ENCODE measurements at regions of chr7 and their contacts with region 1.

Region 1: GRCh38 chr7:158976849-158977593 is 120.7 kb downstream of the DYNC2I1 start:
- DNase-seq: peak; percentile 84
- H3K4me3 ChIP-seq: peak overlapping the region; percentile 39
- H3K27ac ChIP-seq: no peak overlapping the region
- H3K4me1 ChIP-seq: peaks cover 7% of the 10 kb centered on the region
- H3K27me3 ChIP-seq: no peaks in the 10 kb centered on the region
- CTCF ChIP-seq: peak; percentile 95

Region 2: DNA sequence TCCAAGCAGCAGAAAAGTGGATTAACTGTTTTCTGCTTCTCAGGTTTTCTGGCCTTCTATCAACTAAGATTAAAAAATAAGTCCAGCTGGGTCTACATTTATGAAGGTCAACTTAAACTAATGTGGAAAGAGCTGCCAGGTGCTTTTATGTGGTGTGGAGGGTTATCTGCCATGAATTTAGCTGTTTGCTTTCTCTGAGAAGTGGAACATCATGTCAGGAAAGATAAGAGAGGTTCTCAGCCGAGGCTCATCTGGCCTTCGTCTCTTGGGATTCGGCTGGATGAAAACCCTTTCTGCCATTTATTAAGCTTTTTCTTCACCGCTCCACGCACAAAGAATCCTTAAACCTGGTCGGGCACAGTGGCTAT is 394.9 kb before region 1 on chr7:
- CTCF ChIA-PET with region 1: interaction called, 13 read pairs
- POLR2A ChIA-PET with region 1: no interaction called
- intact Hi-C with region 1: no loop called
- DNase-seq: no peak
- H3K4me3 ChIP-seq: no peak overlapping the region
- H3K27ac ChIP-seq: no peak overlapping the region
- H3K4me1 ChIP-seq: no peaks in the 10 kb centered on the region
- H3K27me3 ChIP-seq: peaks cover 44% of the 10 kb centered on the region
- CTCF ChIP-seq: no peak

Region 3: GRCh38 chr7:158695726-158696452 is 281.1 kb before region 1 on chr7:
- CTCF ChIA-PET with region 1: interaction called, 8 read pairs
- POLR2A ChIA-PET with region 1: interaction called, 3 read pairs
- intact Hi-C with region 1: loop called (anchors 5 kb)
- DNase-seq: peak; percentile 73
- H3K4me3 ChIP-seq: no peak overlapping the region
- H3K27ac ChIP-seq: no peak overlapping the region
- H3K4me1 ChIP-seq: no peaks in the 10 kb centered on the region
- H3K27me3 ChIP-seq: no peaks in the 10 kb centered on the region
- CTCF ChIP-seq: peak; percentile 61

Region 4: GRCh38 chr7:158779061-158780000 is 197.7 kb before region 1 on chr7:
- CTCF ChIA-PET with region 1: no interaction called
- POLR2A ChIA-PET with region 1: no interaction called
- intact Hi-C with region 1: loop called (anchors 10 kb)
- DNase-seq: no peak
- H3K4me3 ChIP-seq: no peak overlapping the region
- H3K27ac ChIP-seq: no peak overlapping the region
- H3K4me1 ChIP-seq: no peaks in the 10 kb centered on the region
- H3K27me3 ChIP-seq: no peaks in the 10 kb centered on the region
- CTCF ChIP-seq: no peak

Region 5: GRCh38 chr7:158885624-158886023 is 91.4 kb before region 1 on chr7:
- CTCF ChIA-PET with region 1: interaction called, 3 read pairs
- POLR2A ChIA-PET with region 1: no interaction called
- intact Hi-C with region 1: loop called (anchors 5 kb)
- DNase-seq: peak; percentile 19
- H3K4me3 ChIP-seq: no peak overlapping the region
- H3K27ac ChIP-seq: no peak overlapping the region
- H3K4me1 ChIP-seq: no peaks in the 10 kb centered on the region
- H3K27me3 ChIP-seq: no peaks in the 10 kb centered on the region
- CTCF ChIP-seq: peak; percentile 45; the same call in 1 of the 2 replicates

Region 6: GRCh38 chr7:158903897-158904541 is 73.0 kb before region 1 on chr7:
- CTCF ChIA-PET with region 1: no interaction called
- POLR2A ChIA-PET with region 1: no interaction called
- intact Hi-C with region 1: no loop called
- DNase-seq: no peak
- H3K4me3 ChIP-seq: no peak overlapping the region
- H3K27ac ChIP-seq: no peak overlapping the region
- H3K4me1 ChIP-seq: no peaks in the 10 kb centered on the region
- H3K27me3 ChIP-seq: no peaks in the 10 kb centered on the region
- CTCF ChIP-seq: no peak

Region 7: DNA sequence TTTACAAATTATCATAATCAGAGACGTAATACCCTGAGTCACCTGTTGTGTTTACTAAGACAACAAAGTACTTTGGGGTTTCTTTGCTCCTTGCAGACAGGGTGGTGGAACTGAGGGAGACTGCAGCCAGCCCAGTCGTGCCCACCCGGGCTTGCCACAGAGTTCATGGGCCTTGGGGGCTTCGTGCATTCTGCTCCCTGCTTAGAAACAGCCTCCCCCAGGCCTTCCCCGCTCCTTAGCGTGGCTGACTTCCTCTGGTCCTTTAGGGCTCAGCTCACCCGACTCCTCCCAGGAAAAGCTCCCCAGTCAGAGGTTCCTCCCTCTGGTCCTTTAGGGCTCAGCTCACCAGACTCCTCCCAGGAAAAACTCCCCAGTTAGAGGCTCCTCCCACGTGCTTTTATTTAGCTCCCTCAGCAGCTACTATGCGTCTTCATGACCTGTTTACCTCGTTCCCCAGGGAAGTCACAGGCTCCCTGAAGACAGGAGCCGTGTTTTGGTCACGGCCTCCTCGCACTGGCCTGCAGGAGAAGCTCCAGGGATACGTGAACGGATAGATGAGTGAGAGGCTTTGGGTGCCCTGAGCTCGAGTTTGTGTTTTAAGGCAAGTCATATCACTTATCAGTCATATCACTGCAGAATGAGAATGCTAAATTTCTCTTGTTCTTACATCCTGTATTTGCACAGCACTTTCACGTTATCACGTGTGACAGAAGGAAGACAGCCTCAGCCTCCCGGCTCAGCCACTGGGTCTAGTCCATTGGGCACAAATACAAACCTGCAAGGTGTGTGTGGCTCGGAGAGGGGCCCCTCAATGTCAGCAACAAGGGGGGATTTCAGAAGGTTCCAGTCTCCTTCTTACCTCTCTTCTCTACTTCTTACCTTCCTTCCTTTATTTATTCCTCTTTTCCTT is 220.3 kb after region 1 on chr7:
- CTCF ChIA-PET with region 1: no interaction called
- POLR2A ChIA-PET with region 1: no interaction called
- intact Hi-C with region 1: no loop called
- DNase-seq: peak; percentile 71
- H3K4me3 ChIP-seq: no peak overlapping the region
- H3K27ac ChIP-seq: no peak overlapping the region
- H3K4me1 ChIP-seq: peaks cover 26% of the 10 kb centered on the region
- H3K27me3 ChIP-seq: no peaks in the 10 kb centered on the region
- CTCF ChIP-seq: no peak

Measured in A673 (cell line).